Left lung (tissue), 14 donors: ENCODE measurements at regions of chr5 and their contacts with region 1.

Region 1: GRCh38 chr5:90434116-90434714 is 24.7 kb upstream of the CETN3 start:
- DNase-seq: peak in 1 of 4 donors; percentile 54
- ATAC-seq: peak; percentile 74
- H3K4me3 ChIP-seq: no peak overlapping the region
- H3K27ac ChIP-seq: no peak overlapping the region
- H3K4me1 ChIP-seq: no peaks in the 10 kb centered on the region
- H3K27me3 ChIP-seq: no peaks in the 10 kb centered on the region
- CTCF ChIP-seq: peak; percentile 41 to 57

Region 2: DNA sequence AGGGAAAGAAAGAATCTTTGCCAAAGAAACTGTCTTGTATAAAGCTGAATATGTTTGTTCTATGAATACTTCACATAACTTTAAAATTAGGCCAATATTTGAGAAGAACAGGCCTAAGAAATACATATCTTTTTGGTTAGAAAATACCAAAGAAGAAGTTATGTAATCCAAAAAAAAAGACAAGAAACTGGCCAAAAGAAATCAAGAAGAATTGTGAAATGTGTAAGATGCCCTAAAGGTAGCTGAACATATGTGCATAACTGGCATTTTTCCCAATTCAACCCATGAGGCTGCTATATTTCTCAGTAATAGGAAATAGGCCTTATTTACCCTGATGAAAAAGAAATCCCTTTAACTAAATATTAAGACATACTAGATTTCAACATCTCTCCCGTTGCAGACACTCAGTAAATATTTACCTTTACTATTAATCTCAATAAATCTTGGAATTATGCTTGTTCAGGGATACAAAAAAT is 314.6 kb before region 1 on chr5:
- intact Hi-C with region 1: no loop called
- DNase-seq: no peak
- ATAC-seq: peak; percentile 26
- H3K4me3 ChIP-seq: no peak overlapping the region
- H3K27ac ChIP-seq: no peak overlapping the region
- H3K4me1 ChIP-seq: no peaks in the 10 kb centered on the region
- H3K27me3 ChIP-seq: no peaks in the 10 kb centered on the region
- CTCF ChIP-seq: no peak

Region 3: GRCh38 chr5:90529939-90530677 is 95.9 kb after region 1 on chr5:
- intact Hi-C with region 1: loop called in 1 of 2 experiments (anchors 10 kb)
- DNase-seq: peak in 2 of 4 donors; percentile 69 to 80
- ATAC-seq: peak; percentile 80
- H3K4me3 ChIP-seq: peak overlapping the region; percentile 85 to 87
- H3K27ac ChIP-seq: peak overlapping the region; percentile 87 to 93
- H3K4me1 ChIP-seq: peaks cover 8 to 43% of the 10 kb centered on the region in 2 donors
- H3K27me3 ChIP-seq: peaks cover 0 to 4% of the 10 kb centered on the region in 2 donors
- CTCF ChIP-seq: peak; percentile 53 to 75

Region 4: DNA sequence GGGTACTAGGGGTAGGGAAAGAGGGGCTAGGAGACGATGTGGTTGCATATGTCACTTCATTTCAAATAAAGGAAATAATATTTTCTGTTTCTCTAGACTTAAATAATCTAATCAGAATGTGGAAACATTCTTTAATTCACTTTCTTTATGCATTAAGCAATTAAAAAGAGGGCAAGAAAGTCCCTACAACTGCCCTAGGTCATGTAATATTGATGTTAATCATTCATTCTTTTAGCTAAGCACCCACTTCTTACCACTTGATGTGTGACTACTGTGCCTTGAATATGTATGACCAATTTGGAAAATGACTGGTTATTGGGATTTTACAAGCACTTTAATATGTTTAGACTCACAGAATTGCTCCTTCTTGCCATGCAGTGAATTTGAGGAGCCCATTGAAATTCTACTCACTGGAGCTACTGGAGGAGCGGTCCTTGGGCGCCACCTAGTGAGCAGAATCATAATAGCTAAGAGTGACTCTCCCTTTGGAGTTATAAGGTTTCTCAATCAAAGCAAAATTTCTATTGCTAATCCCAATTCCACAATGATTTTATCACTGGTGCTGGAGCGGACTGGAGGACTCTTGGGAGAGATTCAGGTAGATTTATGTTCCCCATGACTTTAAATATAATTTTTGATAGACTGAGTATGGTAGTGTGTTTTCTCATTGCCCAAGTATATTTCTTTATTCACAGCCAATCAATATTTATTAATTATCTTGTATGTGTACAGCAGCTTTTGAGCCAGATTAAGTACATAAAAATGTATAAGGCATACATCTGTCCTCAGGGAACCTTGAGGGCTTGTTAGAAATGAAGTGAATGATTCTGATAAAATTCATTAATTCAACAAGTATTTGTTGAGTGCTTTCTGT is 349.5 kb after region 1 on chr5:
- intact Hi-C with region 1: loop called in 1 of 2 experiments (anchors 5 kb)
- DNase-seq: peak in 3 of 4 donors; percentile 48 to 69 (median 51)
- ATAC-seq: peak; percentile 98
- H3K4me3 ChIP-seq: no peak overlapping the region
- H3K27ac ChIP-seq: no peak overlapping the region
- H3K4me1 ChIP-seq: no peaks in the 10 kb centered on the region
- H3K27me3 ChIP-seq: no peaks in the 10 kb centered on the region
- CTCF ChIP-seq: peak; percentile 76 to 87

Region 5: DNA sequence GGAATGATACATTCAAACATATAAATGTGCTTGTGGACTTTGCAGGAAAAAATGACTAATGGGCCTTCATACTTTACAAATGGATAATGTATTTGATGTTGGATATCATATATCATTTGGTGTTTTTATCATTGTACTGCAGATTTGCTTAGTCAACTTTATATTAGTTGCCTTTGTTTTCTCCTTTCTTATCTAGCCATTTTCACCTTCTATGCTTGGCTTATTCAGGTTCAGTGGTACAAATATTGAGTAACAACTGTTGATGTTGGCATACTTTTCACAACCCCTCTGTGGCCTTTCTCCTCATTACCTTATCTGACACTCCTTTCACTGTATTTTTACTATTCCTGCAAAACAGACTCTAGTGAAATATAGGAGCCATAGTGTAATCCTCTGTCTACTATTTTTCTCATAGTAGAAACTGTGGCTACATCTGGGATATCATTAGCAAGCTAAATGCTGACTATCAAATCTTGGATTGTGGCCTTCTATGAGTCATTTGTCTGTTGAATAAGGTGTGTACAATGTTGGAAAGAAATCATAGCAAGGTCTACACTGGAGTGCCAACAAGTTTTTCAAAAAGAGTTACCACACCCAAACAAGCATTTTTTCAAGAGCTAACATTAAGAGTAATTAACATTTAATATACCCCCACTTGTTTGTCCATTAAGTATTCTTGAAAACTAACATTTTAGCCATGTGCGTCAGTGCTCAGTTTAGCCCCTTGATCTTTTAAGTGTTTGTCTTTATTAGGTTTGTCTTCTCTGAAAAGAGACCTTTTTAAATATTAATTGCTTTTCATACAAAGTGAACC is 454.5 kb after region 1 on chr5:
- intact Hi-C with region 1: no loop called
- DNase-seq: no peak
- ATAC-seq: peak; percentile 91
- H3K4me3 ChIP-seq: no peak overlapping the region
- H3K27ac ChIP-seq: peak overlapping the region; percentile 6 to 47
- H3K4me1 ChIP-seq: no peaks in the 10 kb centered on the region
- H3K27me3 ChIP-seq: no peaks in the 10 kb centered on the region
- CTCF ChIP-seq: no peak